Right ventricle myocardium superior (tissue), 1 donor: ENCODE measurements at regions of chr11 and their contacts with region 1.

Region 1: GRCh38 chr11:95150946-95151684 is 61.5 kb downstream of the ENDOD1 start:
- DNase-seq: peak; percentile 92
- ATAC-seq: peak; percentile 96

Region 2: DNA sequence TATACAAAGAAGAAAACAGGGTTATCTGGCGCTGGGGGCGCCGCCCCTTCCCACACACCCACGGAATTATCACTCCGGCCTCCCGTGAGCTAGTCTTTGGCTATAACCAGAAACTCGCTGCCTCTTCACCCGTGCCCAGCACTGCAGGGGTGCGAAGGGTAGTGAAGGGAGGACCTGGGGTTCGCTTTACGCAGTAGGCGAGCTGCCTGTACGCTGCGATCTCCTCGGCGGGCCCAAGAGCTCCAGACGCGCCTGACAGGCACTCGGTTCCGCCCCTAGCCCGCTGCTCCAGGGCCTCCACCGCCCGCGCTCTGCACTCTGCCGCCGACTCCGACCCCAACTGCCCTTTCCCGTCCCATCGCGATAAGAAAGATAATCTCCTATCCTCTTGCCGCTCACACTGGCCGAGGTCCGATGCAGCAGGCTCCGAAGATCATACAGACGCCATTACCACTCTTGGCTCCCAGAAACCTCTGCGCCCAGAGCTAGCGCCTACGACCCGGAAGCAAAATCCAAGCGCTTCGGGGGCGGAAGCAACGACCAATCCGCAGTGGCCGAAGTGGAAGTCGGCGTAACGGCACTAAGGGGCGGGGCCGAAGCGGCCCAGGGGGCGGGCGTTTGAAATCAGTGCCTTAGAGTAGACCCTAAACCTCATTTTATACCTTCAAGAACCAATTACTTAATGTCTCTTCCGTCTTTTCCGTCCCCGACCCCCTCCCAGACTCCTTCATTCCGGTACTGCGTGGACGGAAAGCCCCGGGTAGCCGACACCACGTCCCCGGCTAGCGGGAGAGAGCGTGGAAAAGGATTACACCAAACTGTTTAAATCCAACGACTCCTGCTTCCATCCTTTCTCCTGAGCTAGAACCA is 177.8 kb before region 1 on chr11 and contains the starts of genes CWC15 and KDM4D:
- intact Hi-C with region 1: loop called (anchors 5 kb)
- DNase-seq: peak; percentile 96
- ATAC-seq: peak; percentile 100
- total RNA-seq, gene CWC15: 74.8 TPM
- total RNA-seq, gene KDM4D: 0.40 TPM

Region 3: GRCh38 chr11:95067039-95067840 is 83.9 kb before region 1 on chr11:
- intact Hi-C with region 1: loop called (anchors 2 kb)
- DNase-seq: peak; percentile 92
- ATAC-seq: peak; percentile 92

Region 4: DNA sequence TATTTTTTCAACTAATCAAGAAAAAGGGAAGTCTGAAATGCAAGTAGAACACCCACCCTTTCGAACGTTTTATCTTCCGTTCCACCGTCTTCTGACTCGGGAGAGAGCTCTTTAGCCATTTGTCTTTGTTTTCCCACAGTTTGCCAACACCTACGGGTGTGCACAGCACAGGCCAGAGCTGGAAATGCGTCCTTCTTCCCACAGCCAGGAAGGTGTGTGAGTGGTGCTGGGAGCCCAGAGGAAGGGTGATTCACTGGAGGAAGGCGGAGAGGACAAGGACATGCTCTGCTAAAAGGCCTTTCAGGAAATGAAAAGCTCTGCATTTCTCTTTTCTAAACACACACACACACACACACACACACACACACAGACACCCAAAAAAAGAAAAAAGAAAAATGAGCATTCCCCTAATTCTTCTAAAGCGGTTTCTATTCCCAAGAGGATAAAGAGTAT is 42.9 kb before region 1 on chr11:
- intact Hi-C with region 1: no loop called
- DNase-seq: no peak
- ATAC-seq: peak; percentile 65

Region 5: DNA sequence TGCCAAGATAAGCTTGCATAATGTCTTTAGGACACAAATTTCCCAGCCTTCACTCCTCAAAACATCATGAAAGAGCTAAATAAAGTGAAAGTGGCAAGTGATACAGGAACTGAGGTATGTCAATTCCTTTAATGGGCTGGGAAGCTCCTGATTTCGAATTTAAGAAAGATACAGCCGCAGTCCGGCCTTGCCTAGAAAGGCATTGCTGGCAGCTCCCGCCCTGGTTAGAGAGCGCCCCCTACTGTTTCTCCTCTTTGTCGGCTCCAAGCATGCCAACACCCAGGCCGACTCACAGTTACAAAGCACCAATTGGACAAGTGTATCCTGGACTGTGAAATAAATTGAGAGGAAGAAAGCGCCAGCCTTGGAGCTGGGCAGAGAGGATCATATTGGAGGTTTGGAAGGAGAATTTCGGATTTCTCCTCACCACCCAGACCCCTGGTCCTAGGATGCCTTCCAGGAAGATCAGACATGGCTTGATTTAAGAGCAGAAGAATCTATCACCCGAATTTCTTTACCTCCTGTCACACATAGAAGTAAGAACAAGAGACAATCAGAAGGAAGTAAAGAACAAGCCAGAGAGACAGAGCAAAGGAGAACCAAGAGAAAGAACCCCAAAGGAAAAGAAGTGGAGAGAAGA is 554.5 kb after region 1 on chr11:
- intact Hi-C with region 1: loop called (anchors 2 kb)
- DNase-seq: peak; percentile 87
- ATAC-seq: peak; percentile 99

Region 6: DNA sequence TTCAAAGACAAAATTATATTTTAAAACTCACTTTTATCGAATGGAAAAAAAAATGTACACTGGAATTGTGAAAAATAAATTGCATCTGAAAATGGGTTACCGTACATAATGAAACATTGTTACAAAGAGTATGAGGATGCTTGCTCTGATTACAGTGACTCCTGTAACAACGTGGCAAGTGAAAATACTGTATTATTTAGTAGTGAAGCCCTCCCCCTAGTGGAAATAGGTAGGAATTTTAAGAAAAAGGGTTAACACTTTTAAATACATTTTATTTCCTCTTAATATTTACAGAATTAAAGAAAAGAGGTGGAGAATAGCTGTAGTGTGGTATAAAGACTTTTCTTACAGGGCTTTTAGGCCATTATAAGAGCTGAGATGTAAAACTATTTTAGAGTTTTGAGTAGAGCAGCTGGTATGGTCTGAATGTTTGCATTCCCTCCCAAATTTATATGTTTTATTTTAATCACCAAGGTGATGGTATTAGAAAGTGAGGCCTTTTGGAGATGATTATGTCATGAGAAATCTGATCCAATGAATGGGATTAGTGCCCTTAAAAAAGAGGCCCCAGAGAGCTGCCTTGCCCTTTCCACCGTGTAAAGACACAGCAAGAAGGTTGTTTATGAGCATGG is 613.3 kb after region 1 on chr11:
- intact Hi-C with region 1: loop called (anchors 2 kb)
- DNase-seq: no peak
- ATAC-seq: peak; percentile 69